ENCODE measurements at regions of chr13 and their contacts with region 1.

Region 1: GRCh38 chr13:32737111-32737571 is 150.9 kb downstream of the PDS5B start:
- DNase-seq: no peak
- H3K4me3 Mint-ChIP-seq: peak overlapping the region; percentile 72
- H3K27ac Mint-ChIP-seq: peak overlapping the region; percentile 83
- H3K4me1 Mint-ChIP-seq: peaks cover 35% of the 10 kb centered on the region
- H3K27me3 Mint-ChIP-seq: no peaks in the 10 kb centered on the region

Region 2: DNA sequence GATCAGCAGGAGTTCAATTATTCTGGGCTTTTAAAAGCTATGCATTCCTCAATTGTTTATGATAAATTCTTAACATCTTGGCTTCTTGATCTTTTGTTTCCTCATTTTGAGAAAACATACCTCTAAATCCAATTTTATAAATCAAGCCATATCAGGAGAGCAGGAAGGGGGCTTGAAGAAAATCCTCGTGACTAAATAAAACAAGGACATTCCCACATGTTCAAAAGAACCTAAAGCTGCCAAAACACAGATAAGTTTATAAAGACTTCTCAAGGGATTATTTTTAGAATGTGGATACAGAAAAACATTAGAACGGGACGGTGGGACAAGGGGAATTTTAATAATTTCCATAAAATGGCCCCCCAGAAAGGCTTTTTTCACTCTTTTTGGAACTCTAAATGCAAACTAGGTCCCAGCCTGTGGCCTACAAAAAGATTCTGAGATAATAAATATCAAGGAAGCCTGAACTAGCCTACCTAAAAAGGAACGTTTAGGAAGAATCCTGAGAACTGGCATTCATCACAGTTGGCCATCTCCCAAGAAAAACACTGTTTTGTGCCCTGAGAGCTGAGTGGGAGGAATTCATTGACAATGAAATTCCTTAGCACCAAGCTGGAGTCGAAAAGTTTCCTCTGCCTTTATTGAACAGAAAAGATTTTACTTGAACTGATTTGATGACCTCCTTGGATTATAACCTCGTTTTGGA is 452.1 kb before region 1 on chr13:
- CTCF ChIA-PET with region 1: no interaction called
- POLR2A ChIA-PET with region 1: no interaction called
- intact Hi-C with region 1: no loop called
- DNase-seq: no peak
- H3K4me3 Mint-ChIP-seq: no peak overlapping the region
- H3K27ac Mint-ChIP-seq: no peak overlapping the region
- H3K4me1 Mint-ChIP-seq: no peaks in the 10 kb centered on the region
- H3K27me3 Mint-ChIP-seq: no peaks in the 10 kb centered on the region

Region 3: DNA sequence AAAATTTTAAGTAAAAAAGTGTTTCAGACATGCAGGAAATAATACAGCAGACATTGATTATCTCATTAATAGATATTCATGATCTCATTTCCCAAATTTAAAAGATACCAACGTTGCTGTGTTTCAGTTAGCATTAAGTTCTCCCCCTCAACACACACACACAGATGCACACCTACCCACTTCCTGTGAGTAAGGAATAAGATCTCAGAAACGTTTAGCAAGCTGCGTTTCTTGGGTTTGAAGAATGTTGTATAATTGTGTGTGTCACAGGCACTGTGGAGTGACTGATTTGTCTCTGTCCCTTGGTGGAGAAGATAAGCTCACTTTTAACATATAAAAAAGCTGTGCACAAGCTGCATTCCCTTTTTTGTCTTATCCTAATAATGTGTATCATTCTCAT is 45.9 kb after region 1 on chr13:
- CTCF ChIA-PET with region 1: no interaction called
- POLR2A ChIA-PET with region 1: no interaction called
- intact Hi-C with region 1: loop called (anchors 2 kb)
- DNase-seq: peak; percentile 29
- H3K4me3 Mint-ChIP-seq: no peak overlapping the region
- H3K27ac Mint-ChIP-seq: no peak overlapping the region
- H3K4me1 Mint-ChIP-seq: peaks cover 15% of the 10 kb centered on the region
- H3K27me3 Mint-ChIP-seq: no peaks in the 10 kb centered on the region